Endothelial cell of umbilical vein (primary cell): ENCODE measurements at regions of chr12 and their contacts with region 1.

Region 1: DNA sequence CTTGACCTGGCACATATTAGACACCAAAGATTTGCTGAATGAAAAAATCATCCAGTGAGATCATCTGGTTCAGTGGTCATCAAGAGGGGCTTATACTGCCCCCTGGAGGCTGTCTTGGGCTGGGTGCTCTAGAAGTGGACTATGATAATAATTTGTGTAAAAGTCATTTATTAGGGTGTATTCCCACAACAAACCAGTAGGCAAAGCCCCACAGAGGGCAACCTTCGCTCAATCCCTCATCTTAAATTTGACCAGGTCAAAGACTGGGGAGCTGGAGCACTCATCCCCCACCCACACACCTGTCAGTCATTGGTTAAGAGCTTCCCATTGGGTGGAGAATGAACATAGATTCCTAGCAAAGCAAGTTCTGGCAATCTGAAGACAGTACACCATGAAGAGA is 20.0 kb upstream of the FICD start:
- DNase-seq: peak; percentile 38
- H3K4me3 ChIP-seq: no peak overlapping the region
- H3K27ac ChIP-seq: no peak overlapping the region
- H3K4me1 ChIP-seq: no peaks in the 10 kb centered on the region
- H3K27me3 ChIP-seq: no peaks in the 10 kb centered on the region
- CTCF ChIP-seq: peak; percentile 64 to 84
- POLR2A ChIP-seq: no peak

Region 2: GRCh38 chr12:107917912-107918800 is 576.9 kb before region 1 on chr12:
- CTCF ChIA-PET with region 1: interaction called, 15 read pairs
- POLR2A ChIA-PET with region 1: no interaction called
- dilution Hi-C with region 1: no loop called
- intact Hi-C with region 1: loop called (anchors 1 kb)
- DNase-seq: no peak
- H3K4me3 ChIP-seq: no peak overlapping the region
- H3K27ac ChIP-seq: no peak overlapping the region
- H3K4me1 ChIP-seq: no peaks in the 10 kb centered on the region
- H3K27me3 ChIP-seq: no peaks in the 10 kb centered on the region
- CTCF ChIP-seq: peak; percentile 24 to 54
- POLR2A ChIP-seq: no peak

Region 3: DNA sequence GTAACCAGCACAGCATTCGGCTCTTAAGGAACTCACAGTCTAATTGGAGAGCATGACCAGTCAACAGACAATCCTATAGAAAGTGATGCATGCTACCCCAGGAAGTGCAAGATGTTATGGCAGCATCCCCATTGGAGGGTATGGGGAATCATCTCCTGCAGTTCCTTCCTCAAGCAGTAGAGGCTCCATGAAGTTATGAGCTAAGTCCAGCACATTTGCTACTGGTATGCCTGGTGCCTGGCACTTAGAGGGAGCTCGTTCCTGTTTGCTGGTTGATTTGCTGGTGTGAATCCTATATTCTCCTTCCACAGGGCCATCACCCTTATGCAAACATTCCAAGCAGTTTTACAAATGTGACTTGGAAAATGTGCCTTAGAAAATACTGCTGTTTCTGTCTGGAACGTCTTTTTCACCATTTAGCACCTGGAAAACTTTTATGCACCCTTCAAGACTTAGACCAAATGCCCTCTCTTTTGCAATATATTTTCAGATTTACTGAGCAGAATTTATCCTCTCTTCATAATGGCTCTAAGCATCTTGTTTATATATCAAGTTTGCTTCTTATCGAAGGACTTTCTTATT is 502.1 kb before region 1 on chr12:
- CTCF ChIA-PET with region 1: interaction called, 4 read pairs
- POLR2A ChIA-PET with region 1: no interaction called
- dilution Hi-C with region 1: no loop called
- intact Hi-C with region 1: loop called (anchors 1 kb)
- DNase-seq: peak; percentile 20
- H3K4me3 ChIP-seq: no peak overlapping the region
- H3K27ac ChIP-seq: no peak overlapping the region
- H3K4me1 ChIP-seq: no peaks in the 10 kb centered on the region
- H3K27me3 ChIP-seq: no peaks in the 10 kb centered on the region
- CTCF ChIP-seq: peak; percentile 10 to 36
- POLR2A ChIP-seq: no peak

Region 4: GRCh38 chr12:108063192-108063591 is 431.9 kb before region 1 on chr12:
- CTCF ChIA-PET with region 1: interaction called, 13 read pairs
- POLR2A ChIA-PET with region 1: no interaction called
- dilution Hi-C with region 1: no loop called
- intact Hi-C with region 1: loop called (anchors 1 kb)
- DNase-seq: peak; percentile 36
- H3K4me3 ChIP-seq: no peak overlapping the region
- H3K27ac ChIP-seq: no peak overlapping the region
- H3K4me1 ChIP-seq: no peaks in the 10 kb centered on the region
- H3K27me3 ChIP-seq: no peaks in the 10 kb centered on the region
- CTCF ChIP-seq: peak; percentile 37
- POLR2A ChIP-seq: no peak

Region 5: DNA sequence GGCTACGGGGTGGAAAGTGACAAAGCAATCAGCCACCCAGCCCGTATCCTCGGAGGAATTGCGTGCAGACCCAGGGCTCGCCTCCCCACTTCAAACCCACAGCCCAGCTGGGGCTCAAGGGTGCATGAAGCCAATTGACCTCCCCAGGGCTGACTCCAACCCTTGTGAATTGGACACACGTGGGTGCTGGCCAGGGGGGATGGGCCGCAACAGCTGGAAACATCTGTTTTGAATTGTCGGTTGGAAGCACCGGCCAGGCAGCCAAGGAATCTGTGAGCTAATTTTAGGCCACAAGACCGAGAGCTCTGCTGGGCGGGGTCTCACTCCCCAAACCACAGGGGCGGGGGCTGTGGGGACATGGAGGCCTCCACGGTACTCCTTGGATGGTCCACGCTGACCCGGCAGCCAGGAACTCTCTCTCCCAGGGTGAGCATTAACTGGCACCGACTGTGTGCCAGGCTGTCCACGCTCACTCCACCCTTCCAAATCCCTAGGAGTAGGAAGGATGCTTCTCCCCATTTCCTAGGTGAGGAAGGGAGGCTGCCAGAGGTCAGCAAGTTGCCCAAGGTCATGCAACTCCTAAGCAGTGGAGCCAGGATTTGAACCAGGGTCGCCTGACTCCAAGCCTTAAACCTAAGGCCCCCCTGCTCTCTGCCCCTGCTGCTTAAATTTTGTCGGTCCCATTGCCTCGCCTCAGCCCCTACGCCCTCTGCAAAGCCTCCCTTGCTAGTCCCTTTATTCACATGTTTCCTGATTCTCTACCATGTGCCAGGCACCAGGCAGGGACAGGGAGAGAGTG is 114.7 kb after region 1 on chr12:
- CTCF ChIA-PET with region 1: no interaction called
- POLR2A ChIA-PET with region 1: no interaction called
- dilution Hi-C with region 1: no loop called
- intact Hi-C with region 1: no loop called
- DNase-seq: no peak
- H3K4me3 ChIP-seq: no peak overlapping the region
- H3K27ac ChIP-seq: no peak overlapping the region
- H3K4me1 ChIP-seq: no peaks in the 10 kb centered on the region
- H3K27me3 ChIP-seq: no peaks in the 10 kb centered on the region
- CTCF ChIP-seq: no peak
- POLR2A ChIP-seq: no peak